SK-N-SH (cell line): ENCODE measurements at regions of chr3 and their contacts with region 1.

Region 1: DNA sequence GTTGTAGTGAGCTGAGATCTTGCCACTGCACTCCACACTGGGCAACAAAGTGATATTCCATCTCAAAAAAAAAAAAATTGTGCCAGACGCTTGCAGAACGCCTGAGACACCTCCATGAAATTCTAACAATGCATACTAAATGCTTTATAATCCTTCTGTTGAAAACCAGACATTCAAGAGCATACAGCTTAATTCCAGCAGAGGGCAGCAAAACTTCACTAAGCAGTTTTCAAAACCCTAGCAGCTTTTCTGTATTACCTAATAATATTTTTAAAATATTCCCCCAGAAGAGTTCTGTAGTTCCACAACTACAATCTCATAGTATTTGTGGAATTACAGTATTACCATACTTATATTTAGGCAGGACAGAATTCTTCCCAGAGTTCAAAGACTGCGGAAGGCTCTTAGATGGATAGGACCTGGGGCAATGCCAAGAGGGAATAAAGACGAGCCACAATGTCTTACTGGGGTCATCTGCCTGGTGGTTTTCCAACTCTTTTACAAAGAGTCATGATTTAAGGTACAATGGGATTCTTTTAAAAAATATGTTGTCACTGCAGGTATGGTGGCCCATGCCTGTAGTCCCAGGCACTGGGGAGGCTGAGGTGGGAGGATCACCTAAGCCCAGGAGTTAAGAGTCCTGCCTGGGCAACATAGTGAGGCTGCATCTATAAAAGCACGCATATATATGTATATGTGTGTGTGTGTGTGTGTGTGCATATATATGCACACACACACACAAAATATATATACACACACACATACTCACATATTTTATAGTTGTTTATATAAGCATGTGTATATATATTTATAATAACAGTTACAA is 19.6 kb upstream of the TASOR start:
- DNase-seq: peak; percentile 57
- H3K4me3 ChIP-seq: peak overlapping the region in 1 of 2 experiments; percentile 21; a peak in 1 of 4 replicates
- H3K27ac ChIP-seq: no peak overlapping the region
- H3K4me1 ChIP-seq: no peaks in the 10 kb centered on the region
- H3K27me3 ChIP-seq: no peaks in the 10 kb centered on the region
- CTCF ChIP-seq: peak; percentile 95
- EP300 ChIP-seq: no peak
- RAD21 ChIP-seq: peak; percentile 96

Region 2: GRCh38 chr3:56667973-56668579 is 34.6 kb before region 1 on chr3:
- CTCF ChIA-PET with region 1: no interaction called
- POLR2A ChIA-PET with region 1: no interaction called
- DNase-seq: no peak
- H3K4me3 ChIP-seq: no peak overlapping the region
- H3K27ac ChIP-seq: no peak overlapping the region
- H3K4me1 ChIP-seq: no peaks in the 10 kb centered on the region; a peak in 1 of 4 replicates
- H3K27me3 ChIP-seq: no peaks in the 10 kb centered on the region
- CTCF ChIP-seq: no peak
- EP300 ChIP-seq: no peak
- RAD21 ChIP-seq: no peak

Region 3: GRCh38 chr3:56787784-56788256 is 85.1 kb after region 1 on chr3:
- CTCF ChIA-PET with region 1: interaction called, 14 read pairs
- POLR2A ChIA-PET with region 1: no interaction called
- DNase-seq: no peak
- H3K4me3 ChIP-seq: no peak overlapping the region
- H3K27ac ChIP-seq: no peak overlapping the region
- H3K4me1 ChIP-seq: peaks cover 7 to 30% of the 10 kb centered on the region in 2 experiments
- H3K27me3 ChIP-seq: no peaks in the 10 kb centered on the region
- CTCF ChIP-seq: no peak
- EP300 ChIP-seq: no peak
- RAD21 ChIP-seq: no peak

Region 4: DNA sequence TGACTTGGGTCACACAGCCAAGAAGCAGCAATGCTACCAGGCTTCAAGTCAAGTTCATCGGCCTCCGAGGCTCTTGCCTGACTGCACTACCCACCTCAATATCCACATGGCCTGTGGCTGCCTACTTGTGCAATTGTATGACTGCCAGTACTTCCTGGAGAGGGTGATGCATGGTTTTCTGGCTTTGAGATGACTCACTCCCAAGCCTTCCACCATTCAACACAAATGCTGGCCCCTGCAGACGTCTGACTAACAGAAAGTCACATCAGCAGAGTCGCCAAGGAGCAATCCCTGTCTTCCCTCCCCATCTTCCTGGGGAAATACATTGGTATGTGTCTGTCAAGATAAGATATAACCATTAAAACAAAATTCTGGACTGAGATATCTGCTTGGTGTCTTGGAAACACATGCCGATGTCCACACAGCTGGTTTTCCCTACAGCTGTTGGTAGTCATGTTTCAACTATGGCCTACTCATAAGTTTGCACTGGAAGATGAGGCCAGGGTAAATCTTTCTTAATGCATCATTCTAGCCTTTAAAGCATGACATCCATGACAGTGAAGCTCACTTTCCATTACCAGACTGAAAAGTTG is 278.2 kb after region 1 on chr3:
- CTCF ChIA-PET with region 1: interaction called, 199 read pairs
- POLR2A ChIA-PET with region 1: no interaction called
- DNase-seq: no peak
- H3K4me3 ChIP-seq: no peak overlapping the region
- H3K27ac ChIP-seq: peak overlapping the region; percentile 28 to 65
- H3K4me1 ChIP-seq: peaks cover 6 to 38% of the 10 kb centered on the region in 2 experiments; a peak in 2 of 4 replicates
- H3K27me3 ChIP-seq: no peaks in the 10 kb centered on the region
- CTCF ChIP-seq: no peak
- EP300 ChIP-seq: peak in 1 of 2 experiments; percentile 66; a peak in 1 of 4 replicates
- RAD21 ChIP-seq: no peak